Activated B cell treated with CpG ODN at 0.5 μM for 24 hours (primary cell): ENCODE measurements at regions of chr3 and their contacts with region 1.

Region 1: GRCh38 chr3:5194341-5195159 is 7.0 kb downstream of the EDEM1 start:
- DNase-seq: no peak
- ATAC-seq: peak; percentile 55
- H3K4me3 Mint-ChIP-seq: peak overlapping the region; percentile 62
- H3K27ac Mint-ChIP-seq: peak overlapping the region; percentile 89
- H3K4me1 Mint-ChIP-seq: peaks cover 94% of the 10 kb centered on the region
- H3K27me3 Mint-ChIP-seq: no peaks in the 10 kb centered on the region
- CTCF ChIP-seq: no peak

Region 2: GRCh38 chr3:5181469-5182141 is 12.9 kb before region 1 on chr3:
- CTCF ChIA-PET with region 1: interaction called, 4 read pairs
- POLR2A ChIA-PET with region 1: interaction called, 129 read pairs
- intact Hi-C with region 1: no loop called
- DNase-seq: no peak
- ATAC-seq: peak; percentile 80
- H3K4me3 Mint-ChIP-seq: peak overlapping the region; percentile 62
- H3K27ac Mint-ChIP-seq: peak overlapping the region; percentile 90
- H3K4me1 Mint-ChIP-seq: peaks cover 96% of the 10 kb centered on the region
- H3K27me3 Mint-ChIP-seq: no peaks in the 10 kb centered on the region
- CTCF ChIP-seq: no peak